Dendritic cell treated with granulocyte-macrophage colony-stimulating factor and Interleukin-4, amounts not matched to agents 40 ng/mL and 50 ng/mL, for 4 days (primary cell): ENCODE measurements at regions of chr12 and their contacts with region 1.

Region 1: GRCh38 chr12:12689647-12690287 is 6.2 kb downstream of the GPR19 start:
- H3K4me3 Mint-ChIP-seq: no peak overlapping the region
- H3K27ac Mint-ChIP-seq: no peak overlapping the region
- H3K4me1 Mint-ChIP-seq: peaks cover 16% of the 10 kb centered on the region
- H3K27me3 Mint-ChIP-seq: peaks cover 8% of the 10 kb centered on the region

Region 2: GRCh38 chr12:12008931-12009611 is 680.7 kb before region 1 on chr12:
- intact Hi-C with region 1: no loop called
- H3K4me3 Mint-ChIP-seq: peak overlapping the region; percentile 11
- H3K27ac Mint-ChIP-seq: peak overlapping the region; percentile 95
- H3K4me1 Mint-ChIP-seq: peaks cover 53% of the 10 kb centered on the region
- H3K27me3 Mint-ChIP-seq: peaks cover 6% of the 10 kb centered on the region

Region 3: GRCh38 chr12:12654691-12655460 is 34.9 kb before region 1 on chr12:
- intact Hi-C with region 1: loop called (anchors 5 kb)
- H3K4me3 Mint-ChIP-seq: no peak overlapping the region
- H3K27ac Mint-ChIP-seq: peak overlapping the region; percentile 41
- H3K4me1 Mint-ChIP-seq: peaks cover 20% of the 10 kb centered on the region
- H3K27me3 Mint-ChIP-seq: no peaks in the 10 kb centered on the region